B cell (primary cell): ENCODE measurements at regions of chr13 and their contacts with region 1.

Region 1: DNA sequence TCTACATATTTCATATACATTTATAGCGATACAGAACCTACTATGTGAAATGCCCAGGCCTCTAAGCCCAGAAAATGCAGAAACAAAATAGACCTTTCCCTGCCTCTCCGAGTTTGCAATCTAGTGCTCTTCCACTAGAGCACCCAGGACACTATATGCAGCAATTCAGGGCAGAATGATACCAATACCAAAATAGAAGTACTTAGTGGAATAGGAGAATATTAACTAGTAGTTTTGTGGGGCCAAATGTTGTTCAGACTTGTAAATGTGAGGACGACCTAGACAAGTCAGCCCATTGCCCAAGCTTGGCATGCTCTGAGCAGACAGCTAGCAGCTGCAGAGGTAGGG is 35.8 kb upstream of the FLT1 start:
- DNase-seq: no peak
- ATAC-seq: no peak
- H3K4me3 ChIP-seq: no peak overlapping the region
- H3K4me3 Mint-ChIP-seq: no peak overlapping the region
- H3K27ac ChIP-seq: no peak overlapping the region
- H3K27ac Mint-ChIP-seq: no peak overlapping the region
- H3K4me1 ChIP-seq: peaks cover 47 to 51% of the 10 kb centered on the region in 2 donors
- H3K4me1 Mint-ChIP-seq: peaks cover 17% of the 10 kb centered on the region
- H3K27me3 ChIP-seq: peaks cover 3 to 69% (median 41%) of the 10 kb centered on the region in 4 experiments
- H3K27me3 Mint-ChIP-seq: peaks cover 32% of the 10 kb centered on the region
- CTCF ChIP-seq: no peak

Region 2: GRCh38 chr13:28138012-28138755 is 392.5 kb before region 1 on chr13 and contains the start of gene PAN3:
- CTCF ChIA-PET with region 1: no interaction called
- POLR2A ChIA-PET with region 1: no interaction called
- intact Hi-C with region 1: no loop called
- DNase-seq: peak; percentile 96
- ATAC-seq: peak; percentile 65
- H3K4me3 ChIP-seq: peak within 1 kb of the TSS; percentile 80 to 97 (median 93)
- H3K4me3 Mint-ChIP-seq: peak within 1 kb of the TSS; percentile 87
- H3K27ac ChIP-seq: peak within 1 kb of the TSS; percentile 92 to 95
- H3K27ac Mint-ChIP-seq: peak within 1 kb of the TSS; percentile 99
- H3K4me1 ChIP-seq: peaks cover 37 to 43% of the 10 kb centered on the region in 2 donors
- H3K4me1 Mint-ChIP-seq: peaks cover 50% of the 10 kb centered on the region
- H3K27me3 ChIP-seq: no peaks in the 10 kb centered on the region
- H3K27me3 Mint-ChIP-seq: no peaks in the 10 kb centered on the region
- CTCF ChIP-seq: no peak
- total RNA-seq, gene PAN3: 117 and 119 TPM in 2 replicates

Region 3: DNA sequence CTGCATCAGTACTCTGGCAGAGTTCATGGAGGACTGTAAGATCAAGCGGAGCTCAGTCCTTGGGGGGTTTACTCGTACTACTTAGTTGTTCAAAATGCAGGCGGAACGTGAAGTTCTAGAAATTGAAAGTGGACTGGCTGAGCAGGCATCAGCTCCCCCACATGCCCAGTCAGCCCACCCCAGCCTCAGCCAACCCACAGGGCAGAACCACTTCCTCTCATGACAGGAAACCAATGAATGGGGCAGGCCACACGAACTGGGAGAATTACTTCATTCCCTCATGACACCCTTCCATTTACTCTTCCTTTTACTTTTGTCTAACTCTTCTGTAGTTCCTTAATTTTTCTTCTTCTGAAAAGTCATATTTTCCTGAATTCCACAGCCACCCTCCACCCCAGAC is 107.7 kb before region 1 on chr13:
- CTCF ChIA-PET with region 1: no interaction called
- POLR2A ChIA-PET with region 1: no interaction called
- intact Hi-C with region 1: loop called (anchors 5 kb)
- DNase-seq: peak; percentile 84
- ATAC-seq: peak; percentile 97
- H3K4me3 ChIP-seq: peak overlapping the region in 4 of 5 experiments; percentile 27 to 54 (median 38)
- H3K4me3 Mint-ChIP-seq: peak overlapping the region; percentile 79
- H3K27ac ChIP-seq: peak overlapping the region; percentile 75 to 78
- H3K27ac Mint-ChIP-seq: peak overlapping the region; percentile 84
- H3K4me1 ChIP-seq: peaks cover 23 to 25% of the 10 kb centered on the region in 2 donors
- H3K4me1 Mint-ChIP-seq: peaks cover 31% of the 10 kb centered on the region
- H3K27me3 ChIP-seq: no peaks in the 10 kb centered on the region
- H3K27me3 Mint-ChIP-seq: no peaks in the 10 kb centered on the region
- CTCF ChIP-seq: no peak

Region 4: DNA sequence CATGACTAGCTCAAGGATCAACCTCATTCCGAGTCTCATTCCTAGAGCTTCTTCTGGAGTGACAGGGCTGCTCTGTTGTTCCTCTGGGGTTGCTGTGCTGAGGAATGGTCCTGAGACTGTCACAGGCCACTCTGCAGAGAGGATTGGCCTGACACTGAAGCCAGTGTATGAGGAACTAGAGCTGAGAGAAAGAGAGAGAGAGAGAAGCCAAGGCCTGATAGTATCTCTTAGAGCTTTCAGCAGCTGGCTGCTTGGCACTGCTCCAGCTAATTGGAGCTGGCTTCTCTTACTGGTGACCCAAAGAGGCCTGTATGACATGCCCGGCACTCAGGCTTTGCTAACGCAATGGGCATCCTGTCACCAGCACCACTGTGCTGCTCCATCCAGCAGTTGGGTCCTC is 37.6 kb after region 1 on chr13:
- CTCF ChIA-PET with region 1: no interaction called
- POLR2A ChIA-PET with region 1: no interaction called
- intact Hi-C with region 1: loop called (anchors 1 kb)
- DNase-seq: no peak
- ATAC-seq: no peak
- H3K4me3 ChIP-seq: no peak overlapping the region
- H3K4me3 Mint-ChIP-seq: no peak overlapping the region
- H3K27ac ChIP-seq: no peak overlapping the region
- H3K27ac Mint-ChIP-seq: no peak overlapping the region
- H3K4me1 ChIP-seq: no peaks in the 10 kb centered on the region
- H3K4me1 Mint-ChIP-seq: no peaks in the 10 kb centered on the region
- H3K27me3 ChIP-seq: peaks cover 0 to 3% (median 1%) of the 10 kb centered on the region in 4 experiments
- H3K27me3 Mint-ChIP-seq: peaks cover 24% of the 10 kb centered on the region
- CTCF ChIP-seq: no peak

Region 5: GRCh38 chr13:28636674-28637317 is 106.1 kb after region 1 on chr13:
- CTCF ChIA-PET with region 1: no interaction called
- POLR2A ChIA-PET with region 1: no interaction called
- intact Hi-C with region 1: loop called (anchors 10 kb)
- DNase-seq: peak; percentile 86
- ATAC-seq: peak; percentile 81
- H3K4me3 ChIP-seq: peak overlapping the region in 1 of 5 experiments; percentile 24
- H3K4me3 Mint-ChIP-seq: peak overlapping the region; percentile 57
- H3K27ac ChIP-seq: peak overlapping the region; percentile 25 to 72
- H3K27ac Mint-ChIP-seq: peak overlapping the region; percentile 51
- H3K4me1 ChIP-seq: peaks cover 36 to 42% of the 10 kb centered on the region in 2 donors
- H3K4me1 Mint-ChIP-seq: peaks cover 39% of the 10 kb centered on the region
- H3K27me3 ChIP-seq: no peaks in the 10 kb centered on the region
- H3K27me3 Mint-ChIP-seq: peaks cover 5% of the 10 kb centered on the region
- CTCF ChIP-seq: peak; percentile 73